Natural killer cell (primary cell): ENCODE measurements at regions of chr17 and their contacts with region 1.

Region 1: GRCh38 chr17:44775136-44775837 is 16.5 kb downstream of the ADAM11 start:
- DNase-seq: peak; percentile 82 to 99
- ATAC-seq: peak; percentile 87 to 91 (median 91)
- H3K4me3 ChIP-seq: peak overlapping the region; percentile 52
- H3K4me3 Mint-ChIP-seq: peak overlapping the region; percentile 91
- H3K27ac ChIP-seq: no peak overlapping the region
- H3K27ac Mint-ChIP-seq: peak overlapping the region in 1 of 2 donors; percentile 66
- H3K4me1 ChIP-seq: peaks cover 29% of the 10 kb centered on the region
- H3K4me1 Mint-ChIP-seq: peaks cover 0 to 27% of the 10 kb centered on the region in 2 donors
- H3K27me3 ChIP-seq: peaks cover 2% of the 10 kb centered on the region
- H3K27me3 Mint-ChIP-seq: peaks cover 0 to 7% of the 10 kb centered on the region in 2 donors
- CTCF ChIP-seq: peak; percentile 58

Region 2: GRCh38 chr17:44794851-44795413 is 19.6 kb after region 1 on chr17:
- intact Hi-C with region 1: no loop called
- DNase-seq: no peak
- ATAC-seq: no peak
- H3K4me3 ChIP-seq: no peak overlapping the region
- H3K4me3 Mint-ChIP-seq: no peak overlapping the region
- H3K27ac ChIP-seq: no peak overlapping the region
- H3K27ac Mint-ChIP-seq: no peak overlapping the region
- H3K4me1 ChIP-seq: no peaks in the 10 kb centered on the region
- H3K4me1 Mint-ChIP-seq: no peaks in the 10 kb centered on the region
- H3K27me3 ChIP-seq: no peaks in the 10 kb centered on the region
- H3K27me3 Mint-ChIP-seq: peaks cover 0 to 3% of the 10 kb centered on the region in 2 donors
- CTCF ChIP-seq: no peak

Region 3: GRCh38 chr17:44864866-44865660 is 89.8 kb after region 1 on chr17:
- intact Hi-C with region 1: loop called (anchors 1 kb)
- DNase-seq: peak; percentile 37 to 88
- ATAC-seq: peak; percentile 60 to 81 (median 77)
- H3K4me3 ChIP-seq: no peak overlapping the region
- H3K4me3 Mint-ChIP-seq: no peak overlapping the region
- H3K27ac ChIP-seq: no peak overlapping the region
- H3K27ac Mint-ChIP-seq: no peak overlapping the region
- H3K4me1 ChIP-seq: no peaks in the 10 kb centered on the region
- H3K4me1 Mint-ChIP-seq: no peaks in the 10 kb centered on the region
- H3K27me3 ChIP-seq: no peaks in the 10 kb centered on the region
- H3K27me3 Mint-ChIP-seq: no peaks in the 10 kb centered on the region
- CTCF ChIP-seq: peak; percentile 88

Region 4: DNA sequence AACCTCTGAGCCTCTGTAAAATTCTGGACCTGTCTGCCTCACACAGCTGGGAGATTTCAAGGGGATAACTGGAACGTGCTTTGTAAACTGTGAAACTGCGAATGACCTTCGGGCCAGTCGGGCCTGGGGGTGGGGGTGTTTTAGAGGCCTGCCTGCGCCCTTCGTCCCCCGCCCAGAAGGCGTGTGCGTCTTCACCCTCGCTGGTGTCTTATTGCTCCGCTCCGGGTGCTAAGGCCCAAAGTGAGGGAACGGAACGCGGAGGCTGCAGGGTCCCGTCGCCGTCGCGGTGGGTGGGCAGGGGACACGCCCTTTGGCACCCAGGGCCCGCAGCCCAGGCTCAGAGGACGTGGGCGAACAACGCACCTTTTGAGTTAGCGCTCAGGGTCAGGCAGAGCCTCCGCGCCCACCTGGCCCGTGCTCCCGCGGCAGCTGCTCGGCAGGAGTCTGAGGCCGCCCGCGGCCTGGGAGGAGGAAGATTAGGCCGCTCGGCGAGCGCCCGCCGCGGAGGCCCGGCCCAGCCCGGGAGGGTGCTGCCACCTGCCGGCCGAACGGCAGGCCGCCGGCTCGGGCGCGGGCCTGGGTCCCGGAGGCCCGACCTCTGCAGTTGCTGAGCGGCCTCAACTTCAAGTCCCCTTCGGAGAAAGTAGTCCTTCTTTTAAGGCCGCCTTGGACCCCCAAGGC is 246.5 kb after region 1 on chr17:
- intact Hi-C with region 1: loop called (anchors 1 kb)
- DNase-seq: peak; percentile 71 to 84
- ATAC-seq: peak; percentile 74 to 84 (median 80)
- H3K4me3 ChIP-seq: peak overlapping the region; percentile 22
- H3K4me3 Mint-ChIP-seq: peak overlapping the region; percentile 74
- H3K27ac ChIP-seq: no peak overlapping the region
- H3K27ac Mint-ChIP-seq: peak overlapping the region in 1 of 2 donors; percentile 34
- H3K4me1 ChIP-seq: peaks cover 25% of the 10 kb centered on the region
- H3K4me1 Mint-ChIP-seq: peaks cover 12 to 25% of the 10 kb centered on the region in 2 donors
- H3K27me3 ChIP-seq: peaks cover 34% of the 10 kb centered on the region
- H3K27me3 Mint-ChIP-seq: peaks cover 17 to 26% of the 10 kb centered on the region in 2 donors
- CTCF ChIP-seq: peak; percentile 96

Region 5: DNA sequence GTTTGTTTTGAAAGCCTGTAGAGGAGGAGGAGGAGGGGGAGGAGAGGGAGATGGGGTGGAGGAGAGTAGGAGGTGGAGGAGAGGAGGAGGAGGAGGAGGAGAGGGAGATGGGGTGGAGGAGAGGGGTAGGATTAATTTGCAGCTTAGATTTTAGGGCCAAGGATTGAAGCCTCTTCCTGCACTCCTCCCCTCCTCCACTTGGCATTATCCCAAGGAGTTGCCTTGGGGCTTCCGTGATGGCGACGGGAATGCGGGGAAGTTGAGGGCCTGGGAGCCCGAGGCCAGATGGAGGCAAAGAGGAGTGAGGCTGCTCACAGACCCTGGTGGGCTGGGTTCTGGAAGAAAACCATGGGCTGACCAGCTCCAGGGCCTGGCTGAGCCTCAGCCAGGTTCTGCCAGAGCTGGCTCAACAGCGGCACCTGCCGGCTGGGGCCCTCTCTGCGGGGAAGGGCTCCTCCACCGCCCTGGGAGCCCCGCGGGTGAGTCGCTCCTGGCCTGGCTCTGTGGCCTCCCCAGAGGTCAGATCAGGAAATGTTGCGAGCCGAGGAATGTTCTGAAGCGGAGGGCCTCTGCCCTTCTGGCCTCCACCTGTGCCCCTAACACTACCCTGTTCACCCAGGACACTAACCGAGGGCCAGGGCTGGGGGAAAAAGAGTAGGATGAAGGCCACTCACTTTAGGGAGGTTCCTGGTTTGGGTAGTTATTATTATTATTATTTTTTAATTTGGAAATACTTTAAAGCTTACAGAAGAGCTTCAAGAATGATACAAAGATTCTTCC is 422.5 kb after region 1 on chr17:
- intact Hi-C with region 1: loop called (anchors 5 kb)
- DNase-seq: peak; percentile 90
- ATAC-seq: peak; percentile 97 to 100 (median 100)
- H3K4me3 ChIP-seq: no peak overlapping the region
- H3K4me3 Mint-ChIP-seq: no peak overlapping the region
- H3K27ac ChIP-seq: no peak overlapping the region
- H3K27ac Mint-ChIP-seq: peak overlapping the region in 1 of 2 donors; percentile 36
- H3K4me1 ChIP-seq: peaks cover 6% of the 10 kb centered on the region
- H3K4me1 Mint-ChIP-seq: peaks cover 0 to 3% of the 10 kb centered on the region in 2 donors
- H3K27me3 ChIP-seq: no peaks in the 10 kb centered on the region
- H3K27me3 Mint-ChIP-seq: no peaks in the 10 kb centered on the region
- CTCF ChIP-seq: peak; percentile 99